Adrenal gland (tissue), 19 donors: ENCODE measurements at regions of chr18 and their contacts with region 1.

Region 1: GRCh38 chr18:25351777-25352628 is at the start of gene ZNF521:
- DNase-seq: peak; percentile 87 to 92 (median 90)
- H3K4me3 ChIP-seq: peak within 1 kb of the TSS; percentile 9 to 94 (median 74)
- H3K27ac ChIP-seq: peak within 1 kb of the TSS; percentile 75 to 95 (median 91)
- H3K4me1 ChIP-seq: peaks cover 0 to 8% of the 10 kb centered on the region in 2 donors
- H3K27me3 ChIP-seq: no peaks in the 10 kb centered on the region
- CTCF ChIP-seq: peak in 1 of 6 experiments; percentile 17
- POLR2A ChIP-seq: peak; percentile 51 to 88
- total RNA-seq, gene ZNF521: 22.5 to 270 (median 51.7) TPM

Region 2: GRCh38 chr18:25005541-25006403 is 346.2 kb before region 1 on chr18:
- intact Hi-C with region 1: no loop called
- DNase-seq: peak in 1 of 7 donors; percentile 10
- H3K4me3 ChIP-seq: no peak overlapping the region
- H3K27ac ChIP-seq: no peak overlapping the region
- H3K4me1 ChIP-seq: no peaks in the 10 kb centered on the region
- H3K27me3 ChIP-seq: no peaks in the 10 kb centered on the region
- CTCF ChIP-seq: no peak
- POLR2A ChIP-seq: no peak

Region 3: GRCh38 chr18:25322806-25323205 is 29.2 kb before region 1 on chr18:
- intact Hi-C with region 1: no loop called
- DNase-seq: no peak
- H3K4me3 ChIP-seq: no peak overlapping the region
- H3K27ac ChIP-seq: no peak overlapping the region
- H3K4me1 ChIP-seq: peaks cover 19 to 20% of the 10 kb centered on the region in 2 donors
- H3K27me3 ChIP-seq: no peaks in the 10 kb centered on the region
- CTCF ChIP-seq: no peak
- POLR2A ChIP-seq: no peak

Region 4: GRCh38 chr18:25446972-25447371 is 95.0 kb after region 1 on chr18:
- intact Hi-C with region 1: loop called in 1 of 2 experiments (anchors 10 kb)
- DNase-seq: no peak
- H3K4me3 ChIP-seq: no peak overlapping the region
- H3K27ac ChIP-seq: no peak overlapping the region
- H3K4me1 ChIP-seq: peaks cover 0 to 6% of the 10 kb centered on the region in 2 donors
- H3K27me3 ChIP-seq: no peaks in the 10 kb centered on the region
- CTCF ChIP-seq: no peak
- POLR2A ChIP-seq: no peak

Region 5: DNA sequence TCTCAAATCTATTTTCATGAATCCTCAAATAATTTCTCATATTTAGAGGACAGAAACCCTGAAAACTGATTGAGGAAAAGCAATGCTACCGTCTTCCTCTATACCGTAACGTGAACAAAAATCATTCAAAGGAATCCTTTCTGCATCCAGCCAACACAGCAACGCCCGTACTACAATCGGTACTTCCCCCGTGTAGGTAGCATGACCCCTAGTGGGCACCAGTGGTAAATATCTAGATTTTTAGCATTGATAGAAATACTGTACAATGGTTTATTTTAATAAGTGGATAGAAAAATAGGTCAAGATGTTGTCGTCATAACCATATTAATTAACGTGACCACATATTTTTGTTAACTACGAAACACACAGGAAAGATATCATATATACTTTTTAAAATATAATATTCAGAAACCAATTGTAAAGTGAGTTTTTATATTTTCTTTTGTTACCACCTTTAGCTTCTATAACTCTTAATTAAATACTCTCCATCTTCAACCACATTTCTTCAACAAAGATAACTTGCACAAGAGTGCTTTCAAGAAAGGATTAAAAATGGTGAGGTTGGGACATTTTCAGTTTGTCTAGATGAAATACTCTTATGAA is 544.3 kb after region 1 on chr18:
- intact Hi-C with region 1: loop called in 1 of 2 experiments (anchors 5 kb)
- DNase-seq: peak; percentile 31 to 56 (median 50)
- H3K4me3 ChIP-seq: no peak overlapping the region
- H3K27ac ChIP-seq: no peak overlapping the region
- H3K4me1 ChIP-seq: no peaks in the 10 kb centered on the region
- H3K27me3 ChIP-seq: no peaks in the 10 kb centered on the region
- CTCF ChIP-seq: peak; percentile 70 to 84 (median 80)
- POLR2A ChIP-seq: no peak